ENCODE measurements at regions of chr15 and their contacts with region 1.

Region 1: DNA sequence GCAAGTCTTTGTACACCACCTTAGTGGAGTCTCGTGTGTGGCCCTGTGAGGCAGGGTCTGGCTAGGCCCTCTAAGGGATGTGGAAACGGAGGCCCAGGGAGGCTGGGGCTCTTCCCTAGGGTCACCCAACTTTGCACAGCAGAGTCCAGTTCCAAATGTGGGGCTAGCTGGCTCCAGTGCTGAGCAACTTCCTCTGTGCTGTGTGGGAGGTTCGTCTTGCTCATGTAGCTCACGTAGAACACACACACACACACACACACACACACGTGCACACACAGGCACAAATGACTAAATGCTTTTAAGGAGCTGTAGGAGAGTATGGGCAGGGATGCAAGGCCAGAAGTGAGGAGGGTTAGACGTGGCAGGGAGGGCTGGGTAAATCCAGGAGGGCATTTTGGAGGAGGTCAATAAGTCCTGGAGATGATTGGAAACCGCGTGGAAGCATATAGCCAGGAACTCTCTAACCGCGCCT is 213.8 kb downstream of the RPLP1 start:
- DNase-seq: peak in 1 of 5 donors; percentile 12
- H3K4me3 ChIP-seq: no peak overlapping the region
- H3K4me3 Mint-ChIP-seq: peak overlapping the region in 1 of 8 donors; percentile 10
- H3K27ac ChIP-seq: no peak overlapping the region
- H3K27ac Mint-ChIP-seq: peak overlapping the region in 1 of 7 donors; percentile 66
- H3K4me1 ChIP-seq: peaks cover 35% of the 10 kb centered on the region
- H3K4me1 Mint-ChIP-seq: peaks cover 23 to 53% (median 29%) of the 10 kb centered on the region in 4 donors
- H3K27me3 ChIP-seq: no peaks in the 10 kb centered on the region
- H3K27me3 Mint-ChIP-seq: no peaks in the 10 kb centered on the region

Region 2: DNA sequence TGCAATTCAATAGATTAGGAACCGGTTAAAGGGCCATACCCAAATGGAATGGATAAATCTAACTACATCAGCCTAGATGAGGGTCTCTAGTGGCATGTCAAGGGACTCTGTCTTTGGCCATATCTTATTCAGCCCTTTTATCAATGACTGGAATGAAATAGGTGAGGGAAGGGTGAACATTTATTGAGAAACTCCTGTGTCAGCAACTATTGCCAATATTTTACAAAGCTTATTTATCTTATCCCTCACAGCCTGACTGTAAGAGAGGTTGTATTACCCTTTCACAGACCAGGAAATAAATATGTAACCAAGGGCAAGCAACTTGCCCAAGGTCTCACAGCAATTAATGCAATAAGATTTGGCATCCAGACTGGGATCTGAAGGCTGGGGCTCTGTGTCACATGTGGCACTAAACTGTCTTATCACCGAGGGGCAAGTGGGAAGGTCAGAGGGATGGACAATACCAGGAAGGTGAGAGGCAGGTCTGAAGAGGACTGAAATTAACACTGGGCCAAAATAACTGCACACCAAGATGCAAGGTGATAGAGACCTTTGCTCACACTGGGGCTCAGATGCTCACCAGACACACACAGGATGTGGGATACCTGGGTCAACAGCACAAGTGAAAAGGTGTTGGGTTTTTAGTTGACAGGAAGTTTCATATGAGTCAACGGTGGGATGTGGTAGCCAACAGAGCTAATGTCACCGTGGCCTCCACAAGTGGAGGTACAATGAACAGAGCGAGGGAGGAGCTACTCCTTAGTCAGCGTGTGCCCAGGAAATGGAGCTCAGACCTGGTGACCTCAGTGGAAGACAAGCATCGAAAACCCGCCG is 47.5 kb after region 1 on chr15:
- CTCF ChIA-PET with region 1: no interaction called
- POLR2A ChIA-PET with region 1: interaction called, 18 read pairs
- intact Hi-C with region 1: loop called (anchors 5 kb)
- DNase-seq: peak; percentile 80 to 92 (median 85)
- H3K4me3 ChIP-seq: no peak overlapping the region
- H3K4me3 Mint-ChIP-seq: peak overlapping the region; percentile 54 to 88 (median 73)
- H3K27ac ChIP-seq: peak overlapping the region; percentile 11
- H3K27ac Mint-ChIP-seq: peak overlapping the region; percentile 81 to 95 (median 90)
- H3K4me1 ChIP-seq: peaks cover 73% of the 10 kb centered on the region
- H3K4me1 Mint-ChIP-seq: peaks cover 47 to 76% (median 64%) of the 10 kb centered on the region in 4 donors
- H3K27me3 ChIP-seq: no peaks in the 10 kb centered on the region
- H3K27me3 Mint-ChIP-seq: no peaks in the 10 kb centered on the region

Region 3: DNA sequence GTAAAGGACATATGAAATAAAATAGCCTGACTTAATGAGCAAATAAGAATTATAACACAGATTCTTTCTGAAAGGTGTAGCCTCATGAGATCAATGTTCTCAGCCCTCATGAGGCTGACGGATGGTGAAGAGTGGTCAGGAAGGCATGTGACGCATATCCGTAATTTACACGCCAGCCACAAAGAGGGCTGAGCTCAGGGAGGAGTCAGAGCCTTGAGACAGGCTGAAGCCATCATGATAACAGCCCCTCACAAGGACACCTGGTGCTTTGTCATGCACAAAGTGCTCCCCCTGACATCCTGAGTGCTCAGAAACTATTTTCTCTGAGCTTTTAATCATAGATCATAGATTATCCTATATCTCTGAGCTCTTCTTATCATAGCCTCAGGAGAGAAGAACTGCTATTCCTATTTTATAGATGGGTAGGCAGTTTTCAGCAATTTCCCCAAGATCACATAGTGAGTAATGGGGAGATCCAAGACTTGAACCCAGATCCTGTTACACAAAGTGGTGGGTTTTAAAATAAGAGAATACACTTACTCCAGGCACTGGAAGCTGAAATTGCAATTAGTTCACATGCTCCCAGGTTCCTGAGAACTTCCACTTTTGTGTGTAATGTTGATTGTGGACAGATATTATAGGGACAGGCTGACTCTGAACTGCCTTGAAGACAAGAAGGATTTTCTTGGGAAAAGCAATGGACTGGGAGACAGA is 53.2 kb after region 1 on chr15:
- CTCF ChIA-PET with region 1: no interaction called
- POLR2A ChIA-PET with region 1: interaction called, 18 read pairs
- intact Hi-C with region 1: loop called (anchors 5 kb)
- DNase-seq: peak; percentile 68 to 89 (median 78)
- H3K4me3 ChIP-seq: no peak overlapping the region
- H3K4me3 Mint-ChIP-seq: peak overlapping the region in 7 of 8 donors; percentile 18 to 94 (median 51)
- H3K27ac ChIP-seq: peak overlapping the region; percentile 39
- H3K27ac Mint-ChIP-seq: peak overlapping the region; percentile 93 to 97 (median 95)
- H3K4me1 ChIP-seq: peaks cover 96% of the 10 kb centered on the region
- H3K4me1 Mint-ChIP-seq: peaks cover 62 to 92% (median 81%) of the 10 kb centered on the region in 4 donors
- H3K27me3 ChIP-seq: no peaks in the 10 kb centered on the region
- H3K27me3 Mint-ChIP-seq: peaks cover 0 to 1% of the 10 kb centered on the region in 2 donors

Region 4: GRCh38 chr15:70165716-70166284 is 499.4 kb after region 1 on chr15:
- CTCF ChIA-PET with region 1: no interaction called
- POLR2A ChIA-PET with region 1: no interaction called
- intact Hi-C with region 1: no loop called
- DNase-seq: no peak
- H3K4me3 ChIP-seq: no peak overlapping the region
- H3K4me3 Mint-ChIP-seq: no peak overlapping the region
- H3K27ac ChIP-seq: no peak overlapping the region
- H3K27ac Mint-ChIP-seq: no peak overlapping the region
- H3K4me1 ChIP-seq: no peaks in the 10 kb centered on the region
- H3K4me1 Mint-ChIP-seq: no peaks in the 10 kb centered on the region
- H3K27me3 ChIP-seq: no peaks in the 10 kb centered on the region
- H3K27me3 Mint-ChIP-seq: no peaks in the 10 kb centered on the region